Right ventricle myocardium inferior (tissue), 1 donor: ENCODE measurements at regions of chr3 and their contacts with region 1.

Region 1: GRCh38 chr3:56801662-56802377 is at the start of gene ARHGEF3:
- DNase-seq: peak; percentile 93
- ATAC-seq: peak; percentile 95
- total RNA-seq, gene ARHGEF3: 19.0 TPM

Region 2: GRCh38 chr3:56702490-56703315 is 99.1 kb before region 1 on chr3:
- intact Hi-C with region 1: loop called (anchors 1 kb)
- DNase-seq: no peak
- ATAC-seq: peak; percentile 74

Region 3: DNA sequence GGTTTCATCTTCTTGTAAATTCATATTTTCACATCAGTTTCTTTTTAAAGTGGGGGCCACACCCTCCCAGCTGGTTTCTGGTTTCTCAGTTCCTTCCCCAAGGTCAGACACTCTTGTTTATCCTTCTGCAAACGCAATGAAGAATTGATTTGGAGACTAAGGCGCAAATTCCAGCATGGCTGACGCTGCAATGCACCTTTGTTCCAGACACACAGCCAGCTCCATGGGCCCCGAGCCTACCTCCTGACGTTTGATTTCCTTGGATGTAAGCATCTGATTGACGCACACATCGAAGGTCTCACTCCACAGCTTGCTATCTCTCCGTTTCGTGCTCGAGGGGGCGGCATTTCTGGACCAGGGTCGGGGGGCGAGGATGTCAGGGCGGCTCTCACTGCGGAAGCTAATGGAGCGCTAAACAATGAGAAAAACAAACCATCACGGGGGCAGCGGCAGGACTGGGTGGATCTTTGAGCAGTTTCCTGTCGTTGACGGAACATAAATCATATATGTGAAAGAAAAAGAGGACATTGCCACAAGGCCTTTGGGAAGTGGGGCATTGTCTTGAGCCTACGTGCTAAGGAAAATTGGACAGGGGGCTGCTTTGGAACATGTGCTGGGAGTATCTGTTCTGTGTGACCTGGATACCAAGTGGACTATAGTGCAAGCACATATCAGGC is 46.9 kb before region 1 on chr3:
- intact Hi-C with region 1: loop called (anchors 2 kb)
- DNase-seq: no peak
- ATAC-seq: no peak

Region 4: GRCh38 chr3:56904552-56905215 is 102.9 kb after region 1 on chr3:
- intact Hi-C with region 1: loop called (anchors 5 kb)
- DNase-seq: no peak
- ATAC-seq: no peak

Region 5: DNA sequence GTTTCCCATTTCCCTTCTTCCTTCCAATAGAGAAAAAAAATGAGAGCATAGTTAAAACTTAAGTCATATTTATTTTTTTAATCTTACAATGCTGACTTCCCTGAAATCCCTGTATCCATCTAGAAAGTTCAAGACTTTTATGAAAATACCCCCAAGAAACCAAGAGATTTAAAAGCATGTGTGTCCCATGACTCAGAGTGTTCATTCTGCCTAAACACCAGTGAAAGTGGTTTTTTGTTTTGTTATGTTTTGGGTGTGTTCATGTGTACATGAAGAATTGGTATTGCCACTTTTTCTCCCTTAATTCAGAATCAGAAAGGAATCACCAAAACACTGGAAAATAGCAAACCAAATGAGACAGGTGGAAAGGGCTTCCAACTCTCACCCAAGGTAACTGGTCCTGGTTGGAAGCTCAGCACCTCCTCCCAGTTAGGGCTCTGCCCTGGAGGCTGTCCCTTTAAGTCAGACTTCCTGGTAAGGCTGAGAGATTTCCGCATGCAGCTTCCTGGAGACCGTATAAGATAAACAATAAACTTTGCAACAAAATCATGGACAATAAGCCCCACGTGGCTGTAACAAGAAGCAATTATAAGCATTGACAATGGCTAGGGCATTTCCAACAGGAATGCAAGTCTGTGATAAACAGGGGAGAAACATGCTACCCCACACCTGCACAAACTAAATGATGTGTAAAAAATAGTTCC is 121.9 kb after region 1 on chr3:
- intact Hi-C with region 1: loop called (anchors 5 kb)
- DNase-seq: no peak
- ATAC-seq: peak; percentile 62

Region 6: DNA sequence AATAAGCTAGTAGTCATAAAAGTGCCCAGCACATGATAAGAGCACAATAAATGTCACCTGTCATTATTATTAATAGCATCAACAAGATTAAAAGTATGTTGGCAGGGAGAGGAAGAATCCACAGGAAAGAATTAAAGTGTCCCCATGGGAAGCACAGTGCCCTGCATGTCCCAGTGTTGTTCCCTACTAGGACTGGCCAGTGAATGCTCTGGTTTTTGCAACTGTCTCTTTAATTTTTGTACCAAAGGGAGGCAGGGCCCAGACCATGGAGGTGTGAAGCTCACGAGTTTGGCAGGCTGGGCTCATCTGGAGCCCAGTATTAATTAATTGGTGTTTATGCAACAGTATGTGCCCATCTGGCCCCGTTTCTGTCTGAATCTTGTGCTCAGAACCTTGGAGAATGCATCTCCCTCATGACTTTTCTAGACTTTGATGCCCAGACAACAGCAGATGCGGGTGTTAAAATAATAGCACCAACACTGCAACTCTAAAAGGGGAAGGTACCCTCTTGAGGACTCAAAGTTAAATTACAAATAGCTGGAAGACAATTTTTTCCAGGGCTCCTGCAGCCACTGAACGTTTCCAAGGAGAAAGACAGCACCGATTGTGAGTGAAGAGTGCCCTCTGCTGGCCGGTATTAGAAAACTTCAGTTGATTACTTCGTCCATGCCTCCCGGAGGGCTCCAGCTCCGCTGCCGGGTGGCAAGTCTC is 186.8 kb after region 1 on chr3:
- intact Hi-C with region 1: loop called (anchors 1 kb)
- DNase-seq: no peak
- ATAC-seq: peak; percentile 81